ENCODE measurements at regions of chr5 and their contacts with region 1.

Region 1: DNA sequence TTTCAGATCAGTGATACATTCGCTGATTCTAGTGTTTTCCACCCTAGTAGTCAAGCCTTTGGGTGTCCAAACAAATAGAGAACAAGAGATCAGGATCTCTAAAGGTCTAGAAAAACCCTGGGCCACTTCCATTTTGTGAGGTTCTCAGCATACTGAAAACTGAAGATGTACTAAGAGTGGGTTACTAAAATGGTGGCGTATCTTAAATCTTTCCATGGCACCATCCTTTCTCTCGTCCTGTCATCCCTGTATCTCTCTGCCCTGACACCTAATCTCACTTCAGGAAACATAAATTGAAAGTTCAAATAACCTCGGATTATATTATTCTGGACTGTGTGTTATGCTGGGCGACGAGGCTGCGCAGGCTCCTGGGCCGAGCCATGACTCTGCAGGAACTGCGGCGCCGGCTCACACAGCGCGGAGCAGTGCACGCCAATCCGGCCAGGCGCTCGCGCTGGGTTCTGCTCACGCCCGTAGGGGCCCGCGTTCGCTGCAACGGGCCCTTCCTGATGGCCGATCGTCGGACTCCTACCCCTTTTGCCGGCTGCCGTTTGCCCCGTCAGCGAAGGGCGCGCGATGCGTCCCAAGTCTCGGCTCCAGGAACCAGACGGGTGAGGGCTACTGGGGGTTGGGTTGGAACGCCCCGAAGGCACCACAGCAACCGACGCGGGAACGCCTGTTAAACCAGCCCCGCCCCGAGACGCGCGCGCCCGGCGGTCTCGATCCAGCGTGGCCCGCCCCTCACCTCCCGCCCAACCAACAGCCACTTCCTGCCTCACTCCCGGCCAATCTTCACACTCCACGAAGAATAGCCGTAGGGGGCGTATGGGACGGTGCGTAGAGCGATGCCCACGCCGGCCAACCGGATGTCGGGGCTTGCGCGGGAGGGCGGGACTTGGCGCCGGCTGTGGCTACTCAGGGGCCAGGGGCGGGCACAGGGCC is 503 bp upstream of the CANX start:
- DNase-seq: peak; percentile 96 to 99 (median 98)
- ATAC-seq: peak; percentile 89
- H3K4me3 Mint-ChIP-seq: peak overlapping the region; percentile 90 to 99 (median 97)
- H3K27ac Mint-ChIP-seq: peak overlapping the region; percentile 94 to 99 (median 99)
- H3K4me1 Mint-ChIP-seq: peaks cover 17 to 54% (median 43%) of the 10 kb centered on the region in 4 donors
- H3K27me3 Mint-ChIP-seq: no peaks in the 10 kb centered on the region

Region 2: GRCh38 chr5:179732417-179732917 is 34.2 kb after region 1 on chr5 and contains the start of gene MAML1:
- POLR2A ChIA-PET with region 1: interaction called, 25 read pairs
- DNase-seq: peak; percentile 95 to 100 (median 99)
- ATAC-seq: peak; percentile 94 to 95
- H3K4me3 Mint-ChIP-seq: peak within 1 kb of the TSS; percentile 77 to 96 (median 94)
- H3K27ac Mint-ChIP-seq: peak within 1 kb of the TSS; percentile 91 to 97 (median 96)
- H3K4me1 Mint-ChIP-seq: peaks cover 9 to 50% (median 39%) of the 10 kb centered on the region in 4 donors
- H3K27me3 Mint-ChIP-seq: no peaks in the 10 kb centered on the region
- polyA plus RNA-seq, gene MAML1: 2.8 to 9.6 (median 3.3) TPM

Region 3: DNA sequence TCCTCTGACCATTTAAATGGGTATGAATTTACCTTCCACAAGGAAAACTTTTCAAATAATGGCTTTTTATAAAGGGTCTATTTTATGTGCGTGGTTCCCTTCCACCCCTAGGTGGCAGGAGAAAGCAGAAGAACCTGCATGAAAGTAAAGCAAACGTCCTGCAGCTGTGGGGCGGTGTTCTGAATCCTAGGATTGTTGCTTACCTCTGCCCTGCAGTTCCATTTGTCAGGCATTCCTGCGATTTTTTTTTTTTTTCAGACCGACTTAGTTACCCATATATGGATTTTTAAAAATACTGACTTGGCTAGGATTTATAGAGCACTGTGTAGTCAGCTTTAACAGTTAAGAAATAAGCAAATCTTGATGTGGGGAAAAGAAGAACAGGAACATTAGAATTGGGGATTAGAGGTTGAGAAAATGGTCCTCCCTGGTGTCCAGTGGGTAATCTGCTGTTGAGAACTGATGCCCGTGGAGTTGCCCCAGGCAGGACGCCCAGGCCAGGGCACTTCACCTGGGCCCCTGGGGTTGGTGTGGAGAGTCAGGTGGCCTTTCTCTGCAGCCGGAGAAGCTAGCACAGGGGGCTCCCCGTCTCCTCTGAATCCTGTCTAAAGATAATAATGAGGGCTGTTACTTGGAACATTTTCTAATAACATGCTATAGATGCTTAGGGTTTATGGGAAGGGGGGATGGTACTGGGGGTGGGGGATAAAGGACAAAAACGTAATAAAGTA is 65.1 kb after region 1 on chr5:
- POLR2A ChIA-PET with region 1: no interaction called
- DNase-seq: peak; percentile 20 to 76 (median 52)
- ATAC-seq: peak; percentile 63 to 81
- H3K4me3 Mint-ChIP-seq: peak overlapping the region in 2 of 10 donors; percentile 24 to 36
- H3K27ac Mint-ChIP-seq: peak overlapping the region in 5 of 10 donors; percentile 2 to 88 (median 28)
- H3K4me1 Mint-ChIP-seq: peaks cover 33 to 73% (median 60%) of the 10 kb centered on the region in 4 donors
- H3K27me3 Mint-ChIP-seq: no peaks in the 10 kb centered on the region